ENCODE measurements at regions of chr2 and their contacts with region 1.

Region 1: DNA sequence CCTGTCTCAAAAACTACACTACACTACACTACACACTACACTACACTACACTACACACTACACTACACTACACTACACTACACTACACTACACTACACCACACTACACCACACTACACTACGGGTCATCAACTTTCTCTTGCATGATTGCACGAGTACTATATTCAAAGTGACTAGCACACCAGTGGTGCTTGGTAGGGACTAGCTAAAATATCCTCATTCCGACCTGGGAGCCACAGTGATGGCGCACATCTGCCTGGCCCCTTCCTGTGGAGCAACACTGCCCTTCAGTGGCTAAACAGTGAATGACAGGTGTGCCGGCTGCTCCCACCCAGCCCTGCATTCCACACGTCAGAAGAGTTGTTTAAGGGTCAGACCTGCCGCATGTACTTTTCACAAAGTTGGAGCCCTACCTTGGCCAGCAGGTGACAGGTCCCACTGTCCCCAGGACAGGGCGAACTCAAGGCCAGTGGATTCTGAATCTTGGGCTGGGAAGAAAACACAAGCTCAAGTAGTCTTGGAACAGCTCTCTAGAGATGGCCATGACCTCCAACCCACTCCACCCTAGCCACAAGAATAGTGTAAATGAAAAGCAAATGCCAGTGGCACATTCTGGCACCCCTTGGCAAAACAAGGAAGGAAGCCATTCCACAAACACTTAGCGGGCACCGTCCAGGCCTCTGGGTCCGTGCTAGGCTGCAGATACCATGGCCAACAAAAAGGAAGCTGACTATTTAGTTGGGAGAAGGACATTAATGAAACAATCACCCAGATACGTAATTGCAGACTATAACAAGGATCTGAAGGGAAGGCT is 79.7 kb upstream of the MSH2 start:
- DNase-seq: peak; percentile 73
- H3K4me3 Mint-ChIP-seq: no peak overlapping the region
- H3K27ac Mint-ChIP-seq: no peak overlapping the region
- H3K4me1 Mint-ChIP-seq: no peaks in the 10 kb centered on the region
- H3K27me3 Mint-ChIP-seq: no peaks in the 10 kb centered on the region
- CTCF ChIP-seq: peak; percentile 97

Region 2: DNA sequence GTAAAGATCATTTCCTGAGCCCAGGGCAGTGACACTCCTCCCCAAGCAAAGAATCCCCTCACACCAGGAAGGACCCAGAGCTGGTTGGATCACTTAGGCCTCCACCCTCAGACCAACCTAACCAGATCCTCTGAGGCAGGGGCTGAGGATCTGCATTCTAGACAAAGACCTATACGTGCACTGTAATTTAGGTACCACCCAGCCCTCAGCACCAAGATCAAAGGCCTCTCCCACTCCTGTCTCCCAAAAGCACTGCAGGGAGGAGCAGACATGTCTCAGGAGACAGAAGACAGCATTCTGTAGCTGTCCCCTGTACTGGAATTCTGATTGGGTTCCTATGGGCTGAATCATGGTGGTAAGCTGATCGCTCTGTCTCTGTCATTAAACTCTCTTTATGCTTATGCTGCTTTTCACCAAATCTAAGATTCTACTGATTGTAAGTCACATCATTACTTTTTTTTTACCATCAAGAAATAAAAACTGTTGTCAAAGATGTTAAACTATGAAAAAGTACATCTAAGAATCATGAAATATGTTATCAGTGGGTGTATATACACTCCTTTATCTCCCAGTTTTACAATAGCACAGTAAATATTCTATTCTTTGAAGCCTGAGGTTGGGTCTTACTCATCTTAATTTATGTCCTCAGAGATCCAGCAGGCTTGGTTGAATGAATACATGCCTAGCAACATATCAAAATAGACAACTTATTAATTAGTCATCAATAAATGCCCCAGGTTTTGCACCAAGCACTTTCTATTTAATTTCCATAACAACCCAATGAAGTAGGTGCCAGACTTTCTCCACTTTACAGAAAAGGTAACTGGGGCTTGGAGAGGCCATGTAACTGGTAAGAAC is 436.0 kb before region 1 on chr2:
- CTCF ChIA-PET with region 1: interaction called, 6 read pairs
- POLR2A ChIA-PET with region 1: no interaction called
- intact Hi-C with region 1: loop called (anchors 1 kb)
- DNase-seq: no peak
- H3K4me3 Mint-ChIP-seq: no peak overlapping the region
- H3K27ac Mint-ChIP-seq: no peak overlapping the region
- H3K4me1 Mint-ChIP-seq: peaks cover 6% of the 10 kb centered on the region
- H3K27me3 Mint-ChIP-seq: no peaks in the 10 kb centered on the region
- CTCF ChIP-seq: no peak

Region 3: DNA sequence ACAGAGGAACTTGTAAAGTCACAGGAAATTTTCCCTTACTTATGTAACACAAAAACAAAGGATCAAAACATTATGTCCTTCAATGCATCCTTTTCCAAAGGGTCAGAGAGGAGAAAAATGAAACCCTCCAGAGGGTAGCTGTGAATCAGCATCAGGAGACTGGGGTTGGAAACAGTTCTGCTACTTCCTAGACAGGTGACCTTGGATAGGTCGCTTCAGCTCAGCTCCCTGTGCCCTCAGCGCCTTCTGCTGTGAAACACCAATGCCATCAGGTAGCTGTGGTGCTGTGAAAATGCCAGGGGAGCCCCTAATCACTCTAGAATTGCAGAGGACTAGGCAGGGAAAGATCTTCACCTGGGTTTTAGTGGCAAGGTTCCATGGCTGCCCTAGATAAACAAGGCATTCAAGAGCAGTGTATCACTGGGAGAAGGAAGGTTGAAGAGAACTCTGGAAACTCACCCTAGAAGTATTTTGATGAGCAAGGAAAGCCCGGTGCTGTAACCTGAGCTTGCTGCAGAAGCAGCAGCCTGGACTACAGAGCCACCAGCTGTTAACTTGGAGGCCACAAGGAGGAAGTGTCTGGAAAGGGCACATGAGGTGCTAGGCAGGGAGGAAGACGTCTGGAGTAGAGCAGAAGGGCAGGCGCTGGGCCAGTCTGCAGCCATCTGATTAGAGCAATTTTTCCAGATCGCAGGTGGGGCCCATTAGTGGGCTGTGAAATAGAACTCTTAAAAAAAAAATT is 306.9 kb before region 1 on chr2:
- CTCF ChIA-PET with region 1: interaction called, 15 read pairs
- POLR2A ChIA-PET with region 1: no interaction called
- intact Hi-C with region 1: loop called (anchors 1 kb)
- DNase-seq: peak; percentile 67
- H3K4me3 Mint-ChIP-seq: no peak overlapping the region
- H3K27ac Mint-ChIP-seq: no peak overlapping the region
- H3K4me1 Mint-ChIP-seq: peaks cover 10% of the 10 kb centered on the region
- H3K27me3 Mint-ChIP-seq: no peaks in the 10 kb centered on the region
- CTCF ChIP-seq: no peak

Region 4: GRCh38 chr2:47127862-47128543 is 195.2 kb before region 1 on chr2:
- CTCF ChIA-PET with region 1: interaction called, 3 read pairs
- POLR2A ChIA-PET with region 1: no interaction called
- intact Hi-C with region 1: loop called (anchors 5 kb)
- DNase-seq: no peak
- H3K4me3 Mint-ChIP-seq: no peak overlapping the region
- H3K27ac Mint-ChIP-seq: no peak overlapping the region
- H3K4me1 Mint-ChIP-seq: no peaks in the 10 kb centered on the region
- H3K27me3 Mint-ChIP-seq: no peaks in the 10 kb centered on the region
- CTCF ChIP-seq: no peak

Region 5: GRCh38 chr2:47277187-47277586 is 46.0 kb before region 1 on chr2:
- CTCF ChIA-PET with region 1: interaction called, 10 read pairs
- POLR2A ChIA-PET with region 1: interaction called, 3 read pairs
- intact Hi-C with region 1: no loop called
- DNase-seq: peak; percentile 27
- H3K4me3 Mint-ChIP-seq: no peak overlapping the region
- H3K27ac Mint-ChIP-seq: no peak overlapping the region
- H3K4me1 Mint-ChIP-seq: peaks cover 15% of the 10 kb centered on the region
- H3K27me3 Mint-ChIP-seq: no peaks in the 10 kb centered on the region
- CTCF ChIP-seq: no peak

Region 6: DNA sequence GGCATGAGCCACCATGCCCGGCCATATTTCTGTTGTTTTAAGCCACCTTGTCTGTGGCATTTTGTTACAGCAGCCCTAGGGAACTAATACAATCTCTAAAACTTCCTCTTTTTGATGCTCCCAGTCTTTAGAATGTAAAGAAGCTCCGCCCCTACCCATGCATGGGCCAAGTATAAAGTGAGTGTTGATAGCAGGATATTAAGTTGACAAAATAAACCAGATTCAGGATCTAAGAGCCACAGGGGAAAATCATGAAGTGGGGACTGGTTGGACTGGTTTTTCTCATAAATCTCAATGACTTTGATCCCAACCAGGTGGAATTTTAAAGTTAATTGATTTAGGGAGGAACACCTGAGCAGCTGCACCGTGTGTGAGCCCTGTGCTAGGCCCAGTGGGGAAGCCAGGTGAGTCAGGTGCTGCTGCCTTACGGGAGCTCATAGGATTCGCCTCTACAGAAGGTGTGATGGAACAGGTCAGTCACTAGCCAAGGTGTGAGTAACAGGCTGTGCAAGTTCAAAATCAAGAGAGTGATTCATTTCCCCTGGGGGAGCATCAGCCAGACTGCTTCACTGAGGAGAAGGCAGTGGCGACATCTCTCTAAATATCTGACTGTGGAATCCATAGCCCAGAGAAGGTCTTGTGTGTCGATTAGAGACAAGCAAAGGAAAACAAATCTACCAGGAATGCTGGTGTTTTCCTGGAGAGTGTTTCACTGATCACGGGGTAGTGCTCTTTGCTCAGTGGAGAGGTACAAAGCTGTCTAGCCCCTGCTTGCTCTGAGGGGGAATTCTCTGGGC is 16.7 kb after region 1 on chr2:
- CTCF ChIA-PET with region 1: interaction called, 53 read pairs
- POLR2A ChIA-PET with region 1: interaction called, 3 read pairs
- intact Hi-C with region 1: no loop called
- DNase-seq: peak; percentile 93
- H3K4me3 Mint-ChIP-seq: no peak overlapping the region
- H3K27ac Mint-ChIP-seq: no peak overlapping the region
- H3K4me1 Mint-ChIP-seq: peaks cover 12% of the 10 kb centered on the region
- H3K27me3 Mint-ChIP-seq: no peaks in the 10 kb centered on the region
- CTCF ChIP-seq: no peak

Region 7: DNA sequence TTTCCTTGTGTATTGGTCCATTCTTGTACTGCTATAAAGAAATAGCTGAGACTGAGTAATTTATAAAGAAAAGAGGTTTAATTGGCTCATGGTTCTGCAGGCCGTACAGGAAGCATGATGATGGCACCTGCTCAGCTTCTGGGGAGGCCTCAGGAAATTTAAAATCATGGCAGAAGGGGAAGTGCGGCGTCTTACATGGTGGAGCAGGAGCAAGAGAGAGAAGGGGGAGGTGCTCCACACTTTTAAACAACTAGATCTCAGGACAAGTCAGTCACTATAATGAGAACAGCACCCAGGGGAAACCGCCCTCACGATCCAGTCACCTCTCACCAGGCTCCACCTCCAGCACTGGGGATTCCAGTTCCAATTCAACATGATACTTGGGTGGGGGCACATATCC is 134.1 kb after region 1 on chr2:
- CTCF ChIA-PET with region 1: no interaction called
- POLR2A ChIA-PET with region 1: no interaction called
- intact Hi-C with region 1: no loop called
- DNase-seq: no peak
- H3K4me3 Mint-ChIP-seq: no peak overlapping the region
- H3K27ac Mint-ChIP-seq: no peak overlapping the region
- H3K4me1 Mint-ChIP-seq: no peaks in the 10 kb centered on the region
- H3K27me3 Mint-ChIP-seq: no peaks in the 10 kb centered on the region
- CTCF ChIP-seq: no peak

Region 8: GRCh38 chr2:47849368-47849767 is 526.2 kb after region 1 on chr2:
- CTCF ChIA-PET with region 1: no interaction called
- POLR2A ChIA-PET with region 1: no interaction called
- intact Hi-C with region 1: no loop called
- DNase-seq: no peak
- H3K4me3 Mint-ChIP-seq: no peak overlapping the region
- H3K27ac Mint-ChIP-seq: no peak overlapping the region
- H3K4me1 Mint-ChIP-seq: peaks cover 16% of the 10 kb centered on the region
- H3K27me3 Mint-ChIP-seq: no peaks in the 10 kb centered on the region
- CTCF ChIP-seq: no peak